ENCODE measurements at regions of chr5 and their contacts with region 1.

Region 1: DNA sequence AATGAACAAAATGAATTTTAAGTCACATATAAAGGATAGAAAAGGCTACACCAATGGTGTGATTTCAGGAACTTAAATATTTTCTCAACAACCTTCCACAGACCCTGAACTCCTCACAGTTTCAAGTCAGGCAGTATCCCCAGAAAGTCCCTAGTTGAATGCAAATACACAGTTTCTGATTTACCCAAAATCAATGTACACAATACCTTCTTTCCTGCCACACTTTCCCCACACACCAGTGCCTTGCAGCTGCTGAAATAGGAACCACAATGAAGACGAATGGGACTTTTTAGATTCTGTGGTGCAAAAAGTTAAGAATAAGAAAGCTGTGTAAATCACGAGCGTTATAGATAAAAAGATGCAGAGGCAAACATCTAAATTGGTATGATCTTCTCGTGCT is 552.4 kb upstream of the MEF2C start:
- DNase-seq: peak; percentile 90
- ATAC-seq: peak; percentile 88
- H3K4me3 ChIP-seq: 0 out of 2 replicates have a peak overlapping the region, but pooled peaks have one; percentile 41
- H3K27ac ChIP-seq: peak overlapping the region; percentile 92
- H3K4me1 ChIP-seq: peaks cover 29% of the 10 kb centered on the region; the same call in 1 of the 2 replicates
- H3K27me3 ChIP-seq: no peaks in the 10 kb centered on the region
- CTCF ChIP-seq: 0 out of 6 replicates have a peak, but pooled peaks of 1 of the 3 experiments have one; percentile 3
- EP300 ChIP-seq: peak; percentile 50 to 87; a peak in 2 of 4 replicates
- POLR2A ChIP-seq: 0 out of 2 replicates have a peak, but pooled peaks have one; percentile 28
- RAD21 ChIP-seq: peak; percentile 53

Region 2: GRCh38 chr5:89313804-89314588 is 121.4 kb before region 1 on chr5:
- CTCF ChIA-PET with region 1: interaction called, 10 read pairs
- POLR2A ChIA-PET with region 1: interaction called, 5 read pairs
- RAD21 ChIA-PET with region 1: interaction called, 29 read pairs
- SMC1A ChIA-PET with region 1: interaction called, 16 read pairs
- in situ Hi-C with region 1: no loop called
- intact Hi-C with region 1: loop called (anchors 2 kb)
- DNase-seq: peak; percentile 99
- ATAC-seq: peak; percentile 96
- H3K4me3 ChIP-seq: no peak overlapping the region
- H3K27ac ChIP-seq: peak overlapping the region; percentile 97
- H3K4me1 ChIP-seq: peaks cover 40% of the 10 kb centered on the region
- H3K27me3 ChIP-seq: no peaks in the 10 kb centered on the region
- CTCF ChIP-seq: no peak
- EP300 ChIP-seq: peak; percentile 95 to 98
- POLR2A ChIP-seq: peak; percentile 36; the same call in 1 of the 2 replicates
- RAD21 ChIP-seq: peak; percentile 40

Region 3: DNA sequence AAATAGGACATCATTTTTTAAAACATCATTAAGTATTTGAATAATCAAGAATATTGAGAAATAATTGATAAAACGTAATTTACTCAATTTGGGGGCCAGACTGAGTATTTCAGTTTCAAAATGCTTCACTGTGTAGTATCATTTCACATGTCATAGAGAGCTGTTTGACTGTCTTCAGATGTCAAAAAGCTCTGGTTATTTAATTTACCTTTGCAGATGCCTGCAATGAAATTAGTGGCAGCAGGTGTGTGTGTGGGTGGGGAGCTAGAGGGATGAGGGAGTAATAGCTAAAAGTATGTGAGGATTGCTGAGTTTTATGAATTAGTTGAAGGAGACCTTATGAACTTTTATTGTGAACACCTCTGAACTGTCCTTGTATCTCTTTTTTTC is 14.8 kb after region 1 on chr5:
- CTCF ChIA-PET with region 1: interaction called, 3 read pairs
- POLR2A ChIA-PET with region 1: no interaction called
- RAD21 ChIA-PET with region 1: interaction called, 10 read pairs
- SMC1A ChIA-PET with region 1: interaction called, 30 read pairs
- in situ Hi-C with region 1: no loop called
- intact Hi-C with region 1: no loop called
- DNase-seq: no peak
- ATAC-seq: peak; percentile 34; the same call in 1 of the 3 replicates
- H3K4me3 ChIP-seq: no peak overlapping the region
- H3K27ac ChIP-seq: no peak overlapping the region
- H3K4me1 ChIP-seq: peaks cover 1% of the 10 kb centered on the region; the same call in 1 of the 2 replicates
- H3K27me3 ChIP-seq: no peaks in the 10 kb centered on the region
- CTCF ChIP-seq: no peak
- EP300 ChIP-seq: no peak
- POLR2A ChIP-seq: no peak
- RAD21 ChIP-seq: no peak

Region 4: DNA sequence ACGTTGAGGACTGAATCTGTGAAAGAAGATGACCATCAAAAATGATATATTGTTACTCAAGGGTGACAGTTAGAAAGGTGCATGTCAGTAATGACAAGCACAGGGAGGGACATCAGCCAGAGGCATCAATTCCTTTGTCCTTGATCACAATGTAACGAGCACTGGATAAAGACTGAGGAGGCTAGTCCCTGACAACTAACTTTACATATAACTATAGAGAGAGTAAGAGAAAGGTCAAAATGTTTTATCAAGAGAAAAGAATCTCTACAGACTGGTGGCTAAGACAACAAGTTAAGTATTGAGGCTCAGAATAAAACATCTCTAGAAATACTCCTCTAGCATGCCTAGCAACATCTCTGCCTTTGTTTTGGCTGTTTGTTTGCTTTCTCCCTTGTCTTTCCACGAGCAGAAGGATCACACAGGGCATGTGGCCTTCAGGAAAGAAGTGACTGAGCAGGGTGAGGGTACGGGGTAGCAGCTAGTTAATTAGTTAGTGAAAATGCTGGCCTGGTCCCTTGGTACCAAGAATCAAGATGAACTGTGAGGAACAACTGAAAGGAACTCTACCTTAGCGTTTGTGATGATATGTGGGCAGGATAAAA is 171.7 kb after region 1 on chr5:
- CTCF ChIA-PET with region 1: no interaction called
- POLR2A ChIA-PET with region 1: no interaction called
- RAD21 ChIA-PET with region 1: no interaction called
- SMC1A ChIA-PET with region 1: interaction called, 3 read pairs
- in situ Hi-C with region 1: no loop called
- intact Hi-C with region 1: loop called (anchors 5 kb)
- DNase-seq: no peak
- ATAC-seq: no peak
- H3K4me3 ChIP-seq: no peak overlapping the region
- H3K27ac ChIP-seq: no peak overlapping the region
- H3K4me1 ChIP-seq: no peaks in the 10 kb centered on the region
- H3K27me3 ChIP-seq: no peaks in the 10 kb centered on the region
- CTCF ChIP-seq: no peak
- EP300 ChIP-seq: no peak
- POLR2A ChIP-seq: no peak
- RAD21 ChIP-seq: no peak

Region 5: DNA sequence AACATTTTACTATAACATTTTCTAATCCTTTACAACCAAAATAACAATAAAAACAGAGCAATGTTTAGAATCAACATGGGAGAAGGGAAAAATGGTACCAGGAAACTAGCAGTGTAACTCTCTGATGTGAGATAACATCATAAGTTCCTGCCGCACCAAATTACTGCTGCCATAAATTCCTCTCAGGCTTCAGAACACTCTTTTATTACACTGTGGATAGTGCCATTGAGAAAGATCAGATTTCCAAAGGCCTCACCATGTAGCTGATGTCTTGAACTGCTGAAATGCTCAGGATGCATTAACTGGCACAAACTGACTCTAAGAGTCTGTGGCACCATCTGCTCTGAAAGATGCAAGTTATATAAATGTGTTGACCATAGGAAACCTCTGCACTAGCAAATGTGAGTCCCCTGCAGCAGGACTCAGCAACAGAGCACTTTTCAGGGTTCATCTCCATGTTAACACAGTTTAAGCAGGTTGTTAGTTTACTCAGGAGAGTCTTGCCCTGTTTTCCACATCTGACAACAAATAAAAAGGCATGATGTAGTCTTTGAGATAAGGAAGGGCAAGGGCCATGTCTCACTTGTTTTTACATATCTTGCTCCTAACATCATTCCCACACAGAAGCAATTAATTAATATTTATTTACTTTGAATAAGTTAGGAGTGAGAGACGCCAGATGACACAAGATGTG is 756.2 kb after region 1 on chr5:
- CTCF ChIA-PET with region 1: no interaction called
- POLR2A ChIA-PET with region 1: no interaction called
- RAD21 ChIA-PET with region 1: no interaction called
- SMC1A ChIA-PET with region 1: no interaction called
- in situ Hi-C with region 1: no loop called
- intact Hi-C with region 1: no loop called
- DNase-seq: no peak
- ATAC-seq: no peak
- H3K4me3 ChIP-seq: no peak overlapping the region
- H3K27ac ChIP-seq: no peak overlapping the region
- H3K4me1 ChIP-seq: no peaks in the 10 kb centered on the region
- H3K27me3 ChIP-seq: no peaks in the 10 kb centered on the region
- CTCF ChIP-seq: no peak
- EP300 ChIP-seq: no peak
- POLR2A ChIP-seq: no peak
- RAD21 ChIP-seq: no peak

Measured in GM12878 (cell line).